ENCODE measurements at regions of chr12 and their contacts with region 1.

Region 1: DNA sequence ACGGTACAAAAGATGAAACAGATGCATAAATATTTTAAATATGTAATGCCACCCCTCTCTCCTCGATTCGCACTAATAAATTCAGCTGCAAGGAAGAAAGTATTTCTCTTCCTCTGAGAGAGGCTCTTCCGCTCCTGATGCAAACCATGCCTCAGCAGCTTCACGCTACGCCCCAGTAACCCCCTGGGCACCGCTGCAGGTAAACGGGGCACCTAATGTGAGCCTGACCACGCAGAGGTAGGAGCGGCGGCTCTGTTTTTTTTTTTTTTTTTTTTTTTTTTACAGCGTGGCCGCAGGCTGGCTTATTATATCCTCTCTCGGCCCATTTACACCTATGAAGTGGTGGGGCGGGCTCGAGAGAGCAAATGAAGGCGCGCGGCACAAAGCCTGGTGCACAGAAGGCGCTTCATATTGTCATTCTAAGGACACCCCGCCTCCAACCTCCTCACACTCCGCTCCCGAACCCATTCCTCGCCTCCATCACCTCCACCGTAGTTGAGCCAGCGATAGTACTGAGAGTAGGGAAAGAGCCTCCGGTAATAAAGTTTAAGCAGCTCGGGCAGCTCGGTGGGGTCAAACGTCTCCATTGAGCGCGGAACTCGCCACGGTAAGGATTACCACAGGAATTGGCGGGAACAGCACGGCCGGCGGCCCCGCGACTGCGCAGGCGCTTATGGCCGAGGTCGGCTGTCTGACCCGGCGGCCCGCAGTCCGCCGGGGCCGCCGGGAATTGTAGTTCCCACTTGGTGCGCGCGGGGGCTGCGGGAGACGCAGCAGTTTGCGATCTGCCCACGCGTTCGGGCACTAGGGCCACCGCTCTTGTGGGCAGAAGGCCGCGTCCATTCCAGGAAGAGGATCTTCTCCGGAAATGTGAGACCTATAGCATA is at the start of gene PRIM1:
- DNase-seq: peak; percentile 53
- ATAC-seq: peak; percentile 97
- H3K4me3 ChIP-seq: peak within 1 kb of the TSS; percentile 79 to 91
- H3K27ac ChIP-seq: peak within 1 kb of the TSS; percentile 93
- H3K4me1 ChIP-seq: peaks cover 5% of the 10 kb centered on the region; the same call in 1 of the 2 replicates
- H3K27me3 ChIP-seq: no peaks in the 10 kb centered on the region
- CTCF ChIP-seq: no peak
- total RNA-seq, gene PRIM1: 25.0 TPM

Region 2: DNA sequence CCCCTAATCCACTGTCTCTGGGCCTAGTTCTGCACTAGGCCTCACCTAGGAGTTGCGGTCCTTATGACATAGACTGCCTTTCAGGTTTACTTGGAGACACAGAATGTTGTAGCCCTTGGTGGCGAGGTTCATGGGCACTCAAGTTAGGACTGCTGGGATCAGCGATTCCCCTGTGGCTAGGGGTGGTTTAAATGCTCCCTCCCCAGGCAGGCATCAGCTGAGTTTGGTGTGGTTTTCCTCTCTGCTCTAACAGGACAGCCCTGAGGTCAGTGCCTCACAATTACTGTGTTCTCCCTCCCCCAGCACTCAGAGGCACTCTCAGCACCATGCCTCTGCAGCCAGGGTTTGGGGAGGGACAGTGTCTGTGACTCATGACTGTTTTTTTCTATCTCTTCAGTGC is 227.7 kb after region 1 on chr12:
- CTCF ChIA-PET with region 1: interaction called, 10 read pairs
- POLR2A ChIA-PET with region 1: no interaction called
- in situ Hi-C with region 1: no loop called
- intact Hi-C with region 1: no loop called
- DNase-seq: no peak
- ATAC-seq: no peak
- H3K4me3 ChIP-seq: no peak overlapping the region
- H3K27ac ChIP-seq: no peak overlapping the region
- H3K4me1 ChIP-seq: no peaks in the 10 kb centered on the region
- H3K27me3 ChIP-seq: no peaks in the 10 kb centered on the region
- CTCF ChIP-seq: no peak